AG04449 (cell line): ENCODE measurements at regions of chr2 and their contacts with region 1.

Region 1: GRCh38 chr2:105294844-105295481 is 34.6 kb downstream of the TGFBRAP1 start:
- DNase-seq: peak; percentile 28
- H3K4me3 ChIP-seq: no peak overlapping the region
- CTCF ChIP-seq: peak; percentile 68

Region 2: GRCh38 chr2:105102963-105103421 is 192.0 kb before region 1 on chr2:
- CTCF ChIA-PET with region 1: interaction called, 12 read pairs
- POLR2A ChIA-PET with region 1: no interaction called
- DNase-seq: peak; percentile 23
- H3K4me3 ChIP-seq: no peak overlapping the region
- CTCF ChIP-seq: no peak

Region 3: DNA sequence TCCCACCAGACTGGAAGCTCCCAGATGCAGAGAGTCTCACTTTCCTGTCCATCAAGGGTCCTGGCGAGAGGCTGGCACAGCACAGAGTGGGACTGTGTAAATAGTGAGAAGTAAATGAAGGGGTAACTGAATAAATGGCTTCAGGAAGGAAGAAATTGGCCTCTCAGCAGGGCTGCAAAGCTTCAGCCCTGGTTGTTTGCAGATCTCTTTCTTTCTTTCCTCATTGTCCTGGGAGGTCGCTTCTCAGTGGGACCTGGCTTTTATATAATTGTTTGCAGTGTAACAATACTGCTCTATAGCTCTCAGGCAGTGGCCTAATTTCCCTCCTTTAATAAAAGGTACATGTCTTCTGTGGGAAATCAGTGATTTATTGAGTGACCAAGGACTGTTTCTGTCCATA is 128.3 kb before region 1 on chr2:
- CTCF ChIA-PET with region 1: no interaction called
- POLR2A ChIA-PET with region 1: no interaction called
- DNase-seq: no peak
- H3K4me3 ChIP-seq: no peak overlapping the region
- CTCF ChIP-seq: no peak

Region 4: DNA sequence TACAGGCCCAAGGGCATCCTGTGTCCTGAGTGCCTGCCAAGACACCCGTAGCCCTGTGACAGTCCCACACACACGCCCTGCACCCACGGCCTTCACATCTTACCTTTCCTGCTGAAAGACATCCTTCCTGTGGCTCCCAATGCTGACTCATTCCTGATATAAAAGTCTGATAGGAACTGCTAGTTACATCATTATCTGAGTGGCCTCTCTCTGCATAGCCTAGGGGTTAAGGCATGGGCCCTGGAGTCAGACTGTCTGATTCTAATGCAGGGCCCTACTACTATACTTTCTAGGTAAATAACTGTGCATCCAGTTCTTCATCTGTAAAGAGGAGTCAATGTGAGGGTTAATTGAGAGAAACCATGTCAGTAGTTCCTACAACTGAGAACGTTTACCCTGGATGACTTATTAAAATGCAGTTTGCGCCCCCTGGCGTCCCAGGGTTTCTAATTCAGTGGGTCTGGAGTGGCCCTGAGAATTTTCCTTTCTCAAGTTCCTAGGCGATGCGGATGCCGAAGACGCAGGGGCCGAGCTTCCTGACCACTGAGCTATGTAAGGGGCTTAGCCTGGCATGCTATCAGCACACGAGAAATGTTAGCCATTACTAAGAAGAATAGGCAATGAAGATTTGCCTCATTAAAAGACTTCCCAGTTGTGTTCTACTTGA is 59.4 kb before region 1 on chr2:
- CTCF ChIA-PET with region 1: interaction called, 32 read pairs
- POLR2A ChIA-PET with region 1: no interaction called
- DNase-seq: no peak
- H3K4me3 ChIP-seq: no peak overlapping the region
- CTCF ChIP-seq: peak; percentile 71

Region 5: GRCh38 chr2:105278654-105279053 is 16.3 kb before region 1 on chr2:
- CTCF ChIA-PET with region 1: interaction called, 20 read pairs
- POLR2A ChIA-PET with region 1: no interaction called
- DNase-seq: no peak
- H3K4me3 ChIP-seq: no peak overlapping the region
- CTCF ChIP-seq: no peak

Region 6: GRCh38 chr2:105284023-105284422 is 10.9 kb before region 1 on chr2:
- CTCF ChIA-PET with region 1: interaction called, 20 read pairs
- POLR2A ChIA-PET with region 1: no interaction called
- DNase-seq: no peak
- H3K4me3 ChIP-seq: no peak overlapping the region
- CTCF ChIP-seq: no peak

Region 7: GRCh38 chr2:105309147-105309545 is 14.2 kb after region 1 on chr2:
- CTCF ChIA-PET with region 1: interaction called, 20 read pairs
- POLR2A ChIA-PET with region 1: no interaction called
- DNase-seq: no peak
- H3K4me3 ChIP-seq: no peak overlapping the region
- CTCF ChIP-seq: no peak

Region 8: GRCh38 chr2:105388971-105389381 is 94.0 kb after region 1 on chr2:
- CTCF ChIA-PET with region 1: no interaction called
- POLR2A ChIA-PET with region 1: no interaction called
- DNase-seq: peak; percentile 96
- H3K4me3 ChIP-seq: no peak overlapping the region
- CTCF ChIP-seq: no peak

Region 9: DNA sequence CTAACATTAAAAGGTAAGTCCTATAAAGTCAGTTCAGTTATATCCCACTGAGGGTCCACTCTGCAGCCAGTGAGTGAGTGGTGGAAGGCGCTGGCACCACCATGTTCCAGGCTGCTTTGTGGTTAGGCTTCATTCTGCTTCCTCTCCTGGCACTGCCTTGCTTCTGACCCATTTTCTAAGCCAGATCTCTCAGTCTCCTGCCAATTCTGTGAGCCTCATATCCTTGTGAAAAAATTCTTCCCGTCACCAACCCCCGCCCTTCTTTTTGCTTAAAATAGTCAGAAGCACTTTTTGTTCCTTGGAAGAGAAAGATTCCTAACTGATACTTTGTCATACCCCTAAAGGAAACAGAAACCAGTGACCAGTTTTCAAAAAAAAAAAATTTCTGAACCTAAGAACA is 310.0 kb after region 1 on chr2:
- CTCF ChIA-PET with region 1: no interaction called
- POLR2A ChIA-PET with region 1: no interaction called
- DNase-seq: no peak
- H3K4me3 ChIP-seq: no peak overlapping the region
- CTCF ChIP-seq: no peak